ENCODE measurements at regions of chr11 and their contacts with region 1.

Region 1: DNA sequence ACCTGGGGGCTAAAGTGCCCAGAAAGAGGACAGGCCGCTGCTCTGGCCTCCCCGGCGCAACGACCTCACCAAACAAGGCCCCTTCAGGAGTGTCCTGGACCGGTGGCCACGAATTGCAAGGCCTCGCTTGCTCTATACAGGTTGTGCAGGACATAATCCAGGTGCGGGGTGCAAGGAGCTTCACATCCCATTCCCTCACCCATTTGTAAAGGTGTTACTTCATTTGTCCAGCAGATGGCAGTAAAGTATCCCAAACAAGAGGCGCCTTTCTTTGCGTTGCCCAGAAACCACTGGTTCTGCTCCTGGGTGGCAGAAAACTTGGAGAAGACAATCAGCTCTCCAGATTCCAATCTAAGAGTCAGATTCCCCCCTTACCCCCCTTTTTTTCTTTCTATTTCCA is 35.9 kb upstream of the PRDM11 start:
- H3K4me3 Mint-ChIP-seq: no peak overlapping the region
- H3K27ac Mint-ChIP-seq: no peak overlapping the region
- H3K4me1 Mint-ChIP-seq: peaks cover 6% of the 10 kb centered on the region
- H3K27me3 Mint-ChIP-seq: peaks cover 38% of the 10 kb centered on the region

Region 2: DNA sequence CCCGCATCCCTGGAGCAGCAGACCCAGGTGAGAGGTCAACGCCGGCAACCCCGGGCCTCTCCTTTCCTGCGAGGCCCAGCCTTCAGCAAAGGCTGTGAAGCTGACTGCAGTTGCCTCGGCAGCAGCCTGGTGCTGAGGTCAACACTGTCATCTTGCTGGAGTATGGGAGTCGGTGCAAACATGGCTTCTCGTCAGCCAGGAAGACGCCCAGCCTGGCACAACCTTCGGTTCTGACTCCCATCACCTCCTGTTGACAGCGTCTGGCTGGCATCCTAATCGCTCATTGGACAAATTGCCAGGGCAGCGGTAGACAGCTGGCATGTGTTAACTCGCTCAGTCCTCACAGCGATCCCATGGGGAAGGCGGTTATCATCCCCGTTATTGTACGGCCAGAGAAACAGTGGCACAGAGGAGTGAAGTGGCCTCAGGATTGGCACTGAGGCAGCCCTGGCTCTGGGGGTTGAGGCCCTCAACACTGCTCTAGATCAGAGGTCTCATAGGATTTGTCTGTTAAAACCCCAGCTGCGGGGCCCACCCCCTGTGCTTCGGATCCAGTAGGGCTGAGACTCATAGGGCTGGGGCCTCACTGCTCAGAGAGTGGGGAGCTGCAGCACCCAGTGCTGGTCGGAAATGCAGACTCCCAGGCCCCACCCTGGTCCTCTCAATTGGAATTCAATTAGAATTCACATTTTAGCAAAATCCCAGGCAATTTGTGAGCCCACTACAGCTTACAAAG is 120.6 kb before region 1 on chr11:
- intact Hi-C with region 1: no loop called
- H3K4me3 Mint-ChIP-seq: no peak overlapping the region
- H3K27ac Mint-ChIP-seq: no peak overlapping the region
- H3K4me1 Mint-ChIP-seq: no peaks in the 10 kb centered on the region
- H3K27me3 Mint-ChIP-seq: peaks cover 11% of the 10 kb centered on the region

Region 3: DNA sequence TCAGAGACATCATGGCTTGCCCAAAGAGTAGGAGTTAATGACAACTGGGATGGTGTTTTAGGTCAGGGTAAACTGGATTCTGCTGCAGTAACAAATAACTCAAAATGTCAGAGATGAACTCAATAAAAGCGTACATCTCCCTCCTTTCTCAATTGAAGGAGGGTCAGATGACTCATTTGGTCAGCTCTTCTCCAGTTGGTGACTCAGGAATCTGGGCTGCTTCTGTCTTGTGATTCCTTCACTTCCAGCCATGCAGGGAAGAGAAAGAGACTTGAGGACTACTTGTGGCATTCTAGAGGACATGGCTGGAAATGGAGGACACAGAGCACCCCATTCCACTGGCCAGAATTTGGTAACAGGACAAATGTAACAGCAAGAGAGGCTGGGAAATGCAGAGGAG is 178.8 kb after region 1 on chr11:
- intact Hi-C with region 1: loop called (anchors 1 kb)
- H3K4me3 Mint-ChIP-seq: no peak overlapping the region
- H3K27ac Mint-ChIP-seq: no peak overlapping the region
- H3K4me1 Mint-ChIP-seq: no peaks in the 10 kb centered on the region
- H3K27me3 Mint-ChIP-seq: peaks cover 69% of the 10 kb centered on the region

Region 4: DNA sequence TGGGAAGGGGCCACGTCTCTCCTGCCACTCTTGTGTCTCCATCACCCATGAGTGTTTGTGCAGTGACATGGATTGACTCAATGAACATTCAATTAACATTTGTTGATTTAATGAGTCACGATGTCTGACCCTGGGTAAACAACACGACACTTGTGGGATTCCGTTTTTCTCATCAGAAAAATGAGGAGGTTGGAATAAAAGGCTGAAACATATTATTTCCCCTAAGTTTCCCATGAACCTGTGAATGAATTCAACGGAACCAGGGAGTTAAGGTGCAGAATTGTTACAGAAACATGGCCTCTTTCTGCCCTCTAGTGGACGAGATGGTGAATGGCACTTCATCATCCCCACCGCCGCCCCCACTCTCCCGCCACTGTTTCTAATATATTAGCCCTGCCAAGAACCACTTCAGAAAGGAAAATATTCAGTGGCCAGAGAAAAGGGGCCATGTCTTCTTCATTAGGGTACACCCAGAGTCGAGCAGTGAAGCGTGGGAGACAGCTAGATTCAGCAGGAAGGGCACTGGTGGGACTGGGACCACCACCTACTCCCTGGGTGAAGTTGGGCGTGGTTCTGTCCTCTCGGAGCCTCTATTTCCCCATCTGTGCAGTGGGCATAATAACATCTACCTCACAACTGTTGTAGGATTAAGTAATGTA is 221.8 kb after region 1 on chr11:
- intact Hi-C with region 1: loop called (anchors 1 kb)
- H3K4me3 Mint-ChIP-seq: no peak overlapping the region
- H3K27ac Mint-ChIP-seq: no peak overlapping the region
- H3K4me1 Mint-ChIP-seq: no peaks in the 10 kb centered on the region
- H3K27me3 Mint-ChIP-seq: peaks cover 16% of the 10 kb centered on the region

Region 5: DNA sequence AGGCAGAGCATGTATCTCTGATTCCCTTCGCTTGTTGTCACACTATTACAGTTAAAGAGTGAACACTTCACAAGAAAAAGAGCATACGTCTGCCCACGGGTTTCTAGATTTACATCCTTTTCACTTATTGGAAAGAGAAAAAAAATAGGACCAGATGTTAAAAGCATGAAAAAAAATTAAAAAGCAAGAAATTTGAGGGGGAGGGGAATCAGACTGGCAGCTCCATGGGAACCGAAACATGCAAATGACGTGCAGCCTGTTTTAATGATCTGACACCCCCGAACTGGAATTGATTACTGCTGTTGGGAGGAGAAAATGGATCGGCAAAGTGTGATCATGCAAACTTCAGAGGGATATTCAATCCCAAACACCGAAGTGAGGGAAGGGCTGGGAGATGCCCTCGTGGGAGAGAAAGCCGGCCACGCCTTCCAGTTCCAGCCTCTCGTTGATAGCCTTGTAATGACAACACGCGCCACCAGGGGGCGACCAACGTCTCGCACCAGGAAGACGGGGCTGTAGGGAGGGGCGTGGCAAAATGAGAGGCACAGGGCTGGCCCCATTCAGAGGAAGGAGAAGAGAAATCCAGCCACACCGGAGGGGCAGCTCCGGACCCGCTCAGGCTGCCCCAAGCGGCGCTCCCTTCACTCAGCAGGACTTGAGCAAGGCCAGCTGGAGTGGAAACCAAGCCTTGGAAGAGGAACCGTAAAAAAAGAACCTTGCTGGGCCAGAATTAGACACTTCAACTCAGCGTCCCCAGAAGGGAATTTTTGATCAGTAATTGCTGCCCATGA is 229.4 kb after region 1 on chr11:
- intact Hi-C with region 1: loop called (anchors 2 kb)
- H3K4me3 Mint-ChIP-seq: peak overlapping the region; percentile 64
- H3K27ac Mint-ChIP-seq: peak overlapping the region; percentile 41
- H3K4me1 Mint-ChIP-seq: peaks cover 10% of the 10 kb centered on the region
- H3K27me3 Mint-ChIP-seq: peaks cover 17% of the 10 kb centered on the region

Measured in dendritic cell treated with granulocyte-macrophage colony-stimulating factor and Interleukin-4, amounts not matched to agents 40 ng/mL and 50 ng/mL, for 4 days (primary cell).